Heart right ventricle (tissue), 16 donors: ENCODE measurements at regions of chr1 and their contacts with region 1.

Region 1: DNA sequence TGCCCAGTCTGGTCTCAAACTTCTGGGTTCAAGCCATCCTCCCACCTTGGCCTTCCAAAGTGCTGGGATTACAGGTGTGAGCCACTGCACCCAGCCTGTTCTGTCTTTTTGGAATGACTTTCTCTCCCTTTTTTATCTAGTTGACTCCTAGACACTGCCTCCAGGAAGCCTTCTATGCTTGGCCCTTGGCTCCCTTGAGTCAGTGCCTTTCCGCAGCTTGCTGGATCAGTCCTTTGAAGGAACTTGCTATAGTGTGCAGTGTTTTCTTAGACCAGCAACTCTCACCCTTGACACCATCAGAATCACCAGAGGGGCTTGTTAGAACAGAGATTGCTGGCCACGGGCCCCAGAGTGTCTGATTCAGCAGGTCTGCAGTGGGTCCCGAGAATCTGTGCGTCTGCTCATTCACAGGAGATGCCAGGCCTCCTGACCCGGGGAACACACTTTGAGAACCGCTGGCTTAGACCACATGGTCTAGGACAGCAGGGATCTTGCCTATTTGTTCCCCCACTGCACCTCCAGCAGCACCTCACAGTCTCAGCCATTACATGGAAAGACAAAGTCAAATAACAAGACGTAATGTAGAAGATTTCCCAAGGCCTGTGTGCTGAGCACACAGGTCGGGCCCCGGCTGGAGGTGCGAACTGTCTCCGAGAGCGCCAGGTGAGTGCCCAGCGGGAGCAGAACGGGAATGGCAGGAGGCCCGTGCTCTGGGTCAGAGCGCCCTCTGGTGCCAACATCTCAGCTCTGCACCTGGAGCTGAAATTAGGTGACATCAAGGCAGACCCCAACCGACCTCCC is 27.4 kb upstream of the CTPS1 start:
- DNase-seq: peak; percentile 61 to 70
- ATAC-seq: peak; percentile 79 to 87 (median 83)
- H3K4me3 ChIP-seq: no peak overlapping the region
- H3K27ac ChIP-seq: no peak overlapping the region
- H3K4me1 ChIP-seq: peaks cover 0 to 14% (median 0%) of the 10 kb centered on the region in 9 donors
- H3K27me3 ChIP-seq: peaks cover 0 to 26% (median 11%) of the 10 kb centered on the region in 7 donors
- CTCF ChIP-seq: peak; percentile 85 to 97 (median 93)

Region 2: DNA sequence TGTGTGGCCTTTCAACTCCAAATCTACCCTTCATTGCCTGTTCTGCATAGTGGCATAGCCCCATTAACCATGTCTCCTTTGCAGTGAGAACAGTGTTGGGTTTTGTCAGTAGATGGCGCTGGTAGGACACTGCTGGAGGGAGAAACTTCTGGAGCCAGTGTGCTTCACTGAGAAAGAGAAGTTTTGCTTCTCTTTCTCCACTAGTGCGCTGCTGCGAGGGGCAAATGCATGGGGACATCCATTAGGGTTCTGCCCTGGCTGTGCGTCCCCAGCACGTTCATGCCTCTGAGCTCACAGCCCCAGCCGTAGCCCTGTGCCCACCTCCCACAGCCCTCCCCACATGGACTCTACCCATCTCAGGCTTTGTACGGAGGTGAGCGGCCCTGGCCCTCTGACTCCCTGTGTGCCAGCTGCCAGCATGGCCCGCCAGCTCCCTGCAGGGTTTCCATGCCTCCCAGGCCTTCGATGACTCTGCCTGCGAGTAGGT is 339.8 kb before region 1 on chr1:
- intact Hi-C with region 1: loop called in 4 of 10 experiments (anchors 5 to 10 kb)
- DNase-seq: peak in 1 of 2 donors; percentile 74
- ATAC-seq: peak; percentile 75 to 90 (median 84)
- H3K4me3 ChIP-seq: no peak overlapping the region
- H3K27ac ChIP-seq: no peak overlapping the region
- H3K4me1 ChIP-seq: peaks cover 0 to 6% (median 0%) of the 10 kb centered on the region in 9 donors
- H3K27me3 ChIP-seq: peaks cover 0 to 5% (median 0%) of the 10 kb centered on the region in 7 donors
- CTCF ChIP-seq: peak; percentile 42 to 88 (median 84)

Region 3: DNA sequence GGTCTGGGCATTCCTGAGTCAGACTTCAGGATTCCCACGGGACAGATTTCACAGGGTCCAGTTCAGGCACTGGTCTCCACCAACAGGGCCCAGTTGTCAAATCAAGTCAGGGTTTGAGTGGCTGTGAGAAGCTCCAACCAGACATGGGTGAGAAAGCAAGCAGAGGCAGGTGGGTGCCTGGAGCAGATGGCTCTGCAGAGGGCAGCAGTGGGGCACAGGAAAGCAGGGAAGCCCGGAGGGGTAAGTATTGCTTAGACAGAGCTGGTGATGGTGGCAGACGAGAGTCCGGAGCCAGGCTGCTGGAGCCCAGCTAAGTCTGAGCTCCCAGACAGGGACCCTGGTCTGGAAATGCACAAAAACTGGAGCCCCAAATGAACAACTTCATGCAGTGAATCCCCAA is 327.1 kb before region 1 on chr1:
- intact Hi-C with region 1: loop called in 3 of 10 experiments (anchors 10 kb)
- DNase-seq: peak; percentile 12 to 36
- ATAC-seq: peak in 7 of 8 donors; percentile 38 to 87 (median 75)
- H3K4me3 ChIP-seq: no peak overlapping the region
- H3K27ac ChIP-seq: no peak overlapping the region
- H3K4me1 ChIP-seq: no peaks in the 10 kb centered on the region
- H3K27me3 ChIP-seq: peaks cover 0 to 7% (median 0%) of the 10 kb centered on the region in 7 donors
- CTCF ChIP-seq: peak in 7 of 9 donors; percentile 41 to 55 (median 51)

Region 4: DNA sequence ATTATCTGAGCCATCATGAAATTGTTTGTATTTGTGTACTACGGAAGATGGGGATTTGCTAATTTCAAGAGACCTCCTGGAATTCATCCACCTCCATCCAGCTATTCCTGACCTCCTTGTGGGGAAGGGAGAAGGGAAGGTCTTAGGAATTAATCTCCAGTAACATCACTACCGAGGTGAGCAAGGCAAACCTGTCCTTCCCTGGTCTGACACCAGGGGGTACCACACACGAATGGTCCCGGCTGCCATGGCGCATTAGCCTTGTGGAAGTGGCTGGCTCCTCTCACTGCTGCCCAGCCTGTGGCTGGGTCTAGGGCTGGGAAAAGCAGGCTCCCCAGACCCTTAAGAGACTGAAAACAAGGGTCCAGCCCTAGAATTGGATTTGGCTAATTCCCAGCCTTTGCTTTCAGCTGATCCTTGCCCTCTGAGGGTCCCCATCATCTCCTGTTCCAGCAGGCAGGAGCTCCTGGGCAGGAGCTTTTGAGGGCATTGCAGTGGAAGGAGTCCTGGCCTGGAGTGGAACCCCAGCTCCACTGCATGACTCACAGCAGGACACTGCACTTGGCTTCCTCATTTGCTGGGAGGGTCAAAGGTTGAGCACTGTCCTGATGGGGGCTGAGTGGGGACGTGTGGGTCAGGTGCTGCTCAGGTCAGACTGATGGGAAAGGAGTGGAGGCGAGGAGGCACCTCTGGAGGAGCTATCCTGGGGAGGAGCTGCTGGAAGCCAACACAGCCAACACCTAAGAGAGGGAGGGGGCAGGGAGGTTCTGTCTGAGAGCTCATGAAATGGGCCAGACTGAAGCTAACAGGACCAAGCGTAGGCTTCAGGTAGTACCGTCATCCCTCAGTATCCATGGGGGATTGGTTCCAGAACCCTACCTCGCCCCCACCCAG is 321.4 kb before region 1 on chr1:
- intact Hi-C with region 1: loop called in 3 of 10 experiments (anchors 10 kb)
- DNase-seq: no peak
- ATAC-seq: peak in 3 of 8 donors; percentile 43 to 59 (median 51)
- H3K4me3 ChIP-seq: no peak overlapping the region
- H3K27ac ChIP-seq: no peak overlapping the region
- H3K4me1 ChIP-seq: peaks cover 0 to 15% (median 8%) of the 10 kb centered on the region in 9 donors
- H3K27me3 ChIP-seq: no peaks in the 10 kb centered on the region
- CTCF ChIP-seq: peak in 8 of 9 donors; percentile 36 to 56 (median 46)

Region 5: GRCh38 chr1:40774266-40774998 is 177.7 kb before region 1 on chr1:
- intact Hi-C with region 1: loop called in 5 of 10 experiments (anchors 5 to 10 kb)
- DNase-seq: peak in 1 of 2 donors; percentile 55
- ATAC-seq: peak in 6 of 8 donors; percentile 36 to 58 (median 53)
- H3K4me3 ChIP-seq: no peak overlapping the region
- H3K27ac ChIP-seq: no peak overlapping the region
- H3K4me1 ChIP-seq: peaks cover 0 to 13% (median 4%) of the 10 kb centered on the region in 9 donors
- H3K27me3 ChIP-seq: no peaks in the 10 kb centered on the region
- CTCF ChIP-seq: peak; percentile 60 to 86 (median 82)

Region 6: DNA sequence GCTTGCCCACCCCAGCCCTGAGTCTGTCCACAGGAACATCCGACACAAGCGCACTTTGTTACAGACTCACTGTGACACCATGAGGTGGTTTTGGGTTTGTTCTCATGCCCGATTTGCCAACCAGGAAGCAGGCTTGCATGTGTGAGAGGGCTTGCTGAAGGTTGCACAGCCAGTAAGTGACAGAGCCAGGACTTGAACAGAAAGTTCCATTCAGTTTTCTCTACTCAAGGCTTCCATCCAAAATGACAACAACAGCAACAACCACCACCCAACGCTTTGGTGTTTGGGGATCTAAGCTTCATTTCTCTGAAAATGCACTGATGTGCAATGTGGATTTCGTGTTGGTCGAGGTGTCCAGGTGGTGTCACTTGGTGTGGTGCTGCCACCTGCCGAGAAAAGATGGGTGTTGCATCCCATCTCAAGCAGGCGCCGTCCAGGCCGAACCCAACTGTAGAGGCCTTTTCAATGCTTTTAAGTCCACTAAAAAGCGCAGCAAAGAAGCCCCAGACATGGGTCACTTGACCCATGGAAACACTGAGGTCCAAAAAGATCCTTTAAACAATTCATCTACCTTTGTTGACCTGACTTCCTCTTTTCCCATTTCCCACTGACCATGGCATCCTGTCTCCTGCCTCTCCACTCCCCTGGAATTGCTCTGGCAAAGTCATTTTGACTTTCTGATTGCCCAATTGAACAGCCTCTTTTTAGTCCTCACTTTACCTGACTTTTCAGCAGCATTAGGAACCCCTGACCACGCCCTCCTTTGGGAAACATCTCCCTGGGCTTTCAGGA is 102.1 kb before region 1 on chr1:
- intact Hi-C with region 1: loop called (anchors 1 to 2 kb)
- DNase-seq: peak; percentile 63 to 64
- ATAC-seq: peak; percentile 79 to 92 (median 87)
- H3K4me3 ChIP-seq: no peak overlapping the region
- H3K27ac ChIP-seq: no peak overlapping the region
- H3K4me1 ChIP-seq: peaks cover 0 to 9% (median 0%) of the 10 kb centered on the region in 9 donors
- H3K27me3 ChIP-seq: no peaks in the 10 kb centered on the region
- CTCF ChIP-seq: peak; percentile 79 to 93 (median 90)

Region 7: DNA sequence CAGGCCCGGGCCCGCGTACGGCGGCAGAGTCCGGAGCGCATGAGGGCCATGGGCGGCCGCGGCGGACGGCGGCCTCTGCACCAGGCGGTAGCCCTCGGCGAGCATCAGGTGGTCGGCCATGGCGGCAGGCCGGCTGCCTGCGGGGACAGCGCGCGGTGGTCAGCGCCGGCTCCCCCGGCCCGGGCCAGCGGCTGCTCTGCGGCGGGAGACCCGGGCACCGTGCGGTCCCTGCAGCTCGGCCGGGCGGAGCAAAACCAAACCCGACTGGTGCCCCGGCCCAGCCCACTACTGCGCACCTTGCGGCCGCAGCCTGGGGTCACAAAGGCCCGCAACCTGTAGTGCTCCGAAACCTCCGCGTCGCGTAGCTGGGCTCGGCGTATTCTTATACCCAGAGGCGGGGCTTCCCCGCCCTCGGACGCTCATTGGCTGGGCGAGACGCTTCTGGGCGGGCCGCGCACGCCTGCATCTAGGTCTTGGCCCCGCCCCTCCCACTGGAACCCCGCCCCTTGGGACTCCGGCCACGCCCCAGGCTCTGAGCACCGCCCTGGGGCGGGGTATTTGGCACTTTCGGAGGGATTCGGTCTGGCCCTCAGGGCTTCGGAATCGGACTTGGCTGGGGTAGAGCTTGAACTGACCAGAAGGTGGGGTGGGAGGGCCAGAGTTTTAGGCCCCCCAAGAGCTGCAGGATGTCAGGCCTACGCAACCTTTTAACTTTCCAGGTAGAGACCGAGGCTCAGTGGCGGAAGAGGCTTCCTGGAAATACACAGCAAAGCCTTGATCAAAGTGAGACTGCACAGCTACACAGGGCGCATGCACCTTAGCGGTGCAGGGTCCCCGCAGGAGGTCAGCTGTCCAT is 89.9 kb before region 1 on chr1 and contains the start of gene CITED4:
- intact Hi-C with region 1: loop called in 2 of 10 experiments (anchors 5 kb)
- DNase-seq: peak; percentile 94 to 97
- ATAC-seq: peak; percentile 94 to 98 (median 96)
- H3K4me3 ChIP-seq: peak within 1 kb of the TSS; percentile 21 to 89 (median 68)
- H3K27ac ChIP-seq: peak within 1 kb of the TSS; percentile 21 to 96 (median 88)
- H3K4me1 ChIP-seq: peaks cover 0 to 41% (median 15%) of the 10 kb centered on the region in 9 donors
- H3K27me3 ChIP-seq: no peaks in the 10 kb centered on the region
- CTCF ChIP-seq: peak in 7 of 9 donors; percentile 19 to 61 (median 30)
- total RNA-seq, gene CITED4: 14.4 to 88.8 (median 25.8) TPM

Region 8: DNA sequence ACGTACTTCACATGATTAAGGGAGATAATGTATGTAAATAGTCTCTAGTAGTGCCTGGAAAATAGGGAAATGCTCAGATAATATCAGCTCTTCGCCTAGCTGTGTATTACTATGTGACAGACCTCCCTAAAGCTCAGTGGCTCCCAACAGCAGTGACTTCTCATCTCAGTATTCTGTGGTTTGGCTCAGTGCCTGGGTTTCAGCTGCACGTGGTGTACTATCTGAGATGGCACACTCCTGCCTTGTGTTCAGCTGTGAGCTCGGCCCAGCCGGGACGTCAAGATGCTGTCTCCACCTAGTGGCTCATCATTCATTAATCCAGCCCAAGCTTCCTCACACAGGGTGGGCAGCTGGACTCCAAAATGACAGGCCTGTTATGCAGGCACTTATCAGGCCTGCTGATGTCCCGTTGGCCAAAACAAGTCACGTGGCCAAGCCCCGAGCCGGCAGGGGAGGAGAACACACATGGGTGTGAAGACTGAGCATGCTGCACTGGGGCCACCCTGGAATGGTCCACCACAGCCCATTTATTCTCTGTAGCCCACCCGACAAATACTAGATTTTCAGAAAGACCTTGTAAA is 51.6 kb after region 1 on chr1:
- intact Hi-C with region 1: no loop called
- DNase-seq: peak; percentile 81 to 95
- ATAC-seq: peak; percentile 95 to 99 (median 96)
- H3K4me3 ChIP-seq: no peak overlapping the region
- H3K27ac ChIP-seq: peak overlapping the region in 4 of 10 donors; percentile 1 to 24 (median 12)
- H3K4me1 ChIP-seq: peaks cover 6 to 25% (median 12%) of the 10 kb centered on the region in 9 donors
- H3K27me3 ChIP-seq: no peaks in the 10 kb centered on the region
- CTCF ChIP-seq: peak in 8 of 9 donors; percentile 29 to 68 (median 50)

Region 9: DNA sequence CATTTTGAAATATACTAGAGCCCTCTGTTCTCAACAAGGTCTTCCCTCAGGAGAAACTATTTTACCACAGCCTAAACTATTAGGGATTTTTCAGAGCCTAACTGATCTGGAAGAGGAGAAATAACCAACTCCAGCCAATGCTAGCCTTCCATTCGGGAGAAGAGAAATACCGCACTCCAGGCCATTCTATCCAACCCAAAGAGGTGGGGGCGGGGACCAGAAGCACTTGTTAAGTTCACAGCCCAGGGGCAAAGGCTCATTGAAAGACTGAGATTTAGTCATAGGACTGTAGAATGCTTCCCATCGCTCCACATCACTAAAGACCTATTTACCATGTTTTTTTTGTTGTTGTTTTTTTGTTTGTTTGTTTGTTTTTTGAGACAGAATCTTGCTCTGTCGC is 104.8 kb after region 1 on chr1:
- intact Hi-C with region 1: no loop called
- DNase-seq: no peak
- ATAC-seq: no peak
- H3K4me3 ChIP-seq: no peak overlapping the region
- H3K27ac ChIP-seq: no peak overlapping the region
- H3K4me1 ChIP-seq: peaks cover 0 to 6% (median 0%) of the 10 kb centered on the region in 9 donors
- H3K27me3 ChIP-seq: no peaks in the 10 kb centered on the region
- CTCF ChIP-seq: no peak